CD4-positive, alpha-beta memory T cell (primary cell): ENCODE measurements at regions of chr5 and their contacts with region 1.

Region 1: DNA sequence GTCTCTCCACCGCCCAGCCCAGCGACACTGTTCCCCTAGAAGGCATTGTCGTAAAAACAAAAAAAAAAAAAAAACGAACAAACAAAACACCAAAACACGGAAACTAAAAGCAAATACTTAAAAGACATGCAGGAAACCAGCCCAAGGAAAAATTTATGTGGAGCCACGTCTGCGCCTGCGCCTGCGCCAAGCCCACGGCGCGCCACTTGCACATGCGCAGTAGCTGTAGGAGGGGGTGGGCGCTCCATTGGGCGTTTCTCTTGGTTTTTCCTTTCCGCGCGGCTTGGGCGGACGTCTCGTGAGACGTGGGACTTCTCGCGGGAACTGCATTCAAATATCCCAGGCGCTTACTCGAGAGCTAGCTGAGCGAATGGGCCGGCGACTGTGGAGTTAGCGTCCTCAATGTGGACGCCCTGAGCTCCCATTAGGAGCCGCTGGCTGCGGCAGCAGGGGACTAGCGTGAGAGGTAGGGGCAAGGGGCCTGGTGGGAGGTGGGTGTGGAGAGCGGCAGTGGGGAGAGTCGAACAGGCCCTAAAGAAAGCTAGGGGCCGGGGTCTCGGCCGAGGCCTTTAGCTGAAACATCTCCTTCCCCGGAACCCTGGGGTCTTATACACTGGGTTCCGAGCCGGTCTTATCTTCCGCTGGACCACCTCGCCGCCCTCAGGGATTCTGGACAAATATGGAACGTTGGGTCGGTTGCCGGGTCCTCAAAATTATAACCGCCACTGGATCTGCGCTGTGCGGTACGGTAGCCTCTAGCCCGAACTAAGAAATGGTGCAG is at the start of gene SPDL1:
- DNase-seq: peak; percentile 93 to 95 (median 94)
- H3K4me3 ChIP-seq: peak within 1 kb of the TSS; percentile 63 to 82
- H3K4me3 Mint-ChIP-seq: peak within 1 kb of the TSS; percentile 96 to 100 (median 99)
- H3K27ac ChIP-seq: peak within 1 kb of the TSS; percentile 76
- H3K27ac Mint-ChIP-seq: peak within 1 kb of the TSS; percentile 95 to 97 (median 96)
- H3K4me1 ChIP-seq: peaks cover 16% of the 10 kb centered on the region
- H3K4me1 Mint-ChIP-seq: peaks cover 20 to 47% (median 30%) of the 10 kb centered on the region in 4 donors
- H3K27me3 ChIP-seq: no peaks in the 10 kb centered on the region
- H3K27me3 Mint-ChIP-seq: no peaks in the 10 kb centered on the region
- total RNA-seq, gene SPDL1: 12.0 to 12.2 TPM

Region 2: DNA sequence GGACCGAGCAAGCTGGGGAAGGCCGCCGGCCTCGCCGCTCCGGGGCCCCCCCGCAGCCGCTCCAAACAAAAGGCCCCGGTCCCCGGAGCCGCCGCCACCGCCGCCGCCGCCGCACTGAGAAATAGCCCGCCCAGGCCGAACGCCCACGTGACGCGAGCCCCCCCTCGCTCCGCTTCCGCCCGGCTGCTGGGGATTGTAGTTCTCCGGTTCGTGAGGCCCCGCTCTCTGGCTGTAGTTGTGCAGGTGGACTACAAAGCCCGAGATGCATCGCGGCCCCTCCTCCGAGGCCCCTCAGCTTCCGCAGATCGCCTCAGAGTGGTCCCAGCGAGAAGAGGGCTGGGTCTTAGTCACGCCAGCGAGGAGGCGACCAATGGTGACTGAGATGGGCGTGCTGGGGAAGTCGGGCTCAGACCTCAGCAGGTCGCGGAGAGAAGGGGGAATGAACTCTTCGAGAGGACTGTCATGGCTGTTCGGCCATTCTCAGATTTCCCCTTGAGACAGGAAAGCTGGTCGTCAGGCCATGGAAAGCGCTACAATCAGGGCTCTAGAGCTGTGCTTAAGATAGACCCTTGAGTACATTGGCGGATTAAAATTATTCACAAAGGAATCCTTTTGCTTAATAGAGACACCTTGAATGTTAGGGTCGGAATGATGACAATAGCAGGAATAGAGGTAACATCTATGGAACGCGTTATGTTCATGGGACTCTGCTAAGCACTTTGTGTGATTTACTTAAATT is 1004.0 kb before region 1 on chr5:
- CTCF ChIA-PET with region 1: no interaction called
- POLR2A ChIA-PET with region 1: interaction called, 8 read pairs
- intact Hi-C with region 1: loop called (anchors 1 kb)
- DNase-seq: peak; percentile 94 to 98 (median 96)
- H3K4me3 ChIP-seq: peak overlapping the region; percentile 39 to 94
- H3K4me3 Mint-ChIP-seq: peak overlapping the region; percentile 88 to 98 (median 94)
- H3K27ac ChIP-seq: peak overlapping the region; percentile 80
- H3K27ac Mint-ChIP-seq: peak overlapping the region; percentile 87 to 99 (median 97)
- H3K4me1 ChIP-seq: peaks cover 39% of the 10 kb centered on the region
- H3K4me1 Mint-ChIP-seq: peaks cover 23 to 48% (median 36%) of the 10 kb centered on the region in 4 donors
- H3K27me3 ChIP-seq: no peaks in the 10 kb centered on the region
- H3K27me3 Mint-ChIP-seq: no peaks in the 10 kb centered on the region

Region 3: DNA sequence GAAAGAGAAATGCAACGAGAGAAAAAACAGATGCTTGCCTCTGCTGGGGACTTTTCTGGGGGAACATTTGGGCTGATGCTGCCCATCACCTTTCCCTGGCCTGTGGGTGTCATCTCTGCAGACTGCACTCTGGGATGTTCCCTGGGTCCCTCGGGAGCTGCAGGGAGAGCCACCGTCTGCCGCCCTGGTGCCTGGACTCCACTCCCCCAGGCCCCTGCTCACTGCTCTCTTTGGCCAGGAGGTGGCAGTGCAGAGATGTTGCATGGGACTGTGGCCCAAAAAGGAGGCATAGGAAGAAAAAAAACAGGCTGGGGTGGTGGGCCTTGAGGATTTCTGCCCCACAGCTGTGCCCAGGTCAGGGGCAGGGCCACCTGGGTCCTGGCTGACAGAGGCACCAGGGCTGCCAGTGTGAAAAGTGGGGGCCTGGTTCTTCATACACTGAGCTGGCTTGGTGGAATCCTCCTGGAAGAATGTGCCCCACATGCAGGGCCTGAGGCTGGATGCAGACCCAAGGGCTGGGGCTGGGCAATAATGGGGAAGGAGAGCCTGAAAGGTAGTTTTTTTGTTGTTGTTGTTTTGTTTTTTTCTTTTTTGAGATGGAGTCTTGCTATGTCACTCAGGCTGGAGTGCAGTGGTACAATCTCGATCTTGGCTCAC is 636.3 kb before region 1 on chr5:
- CTCF ChIA-PET with region 1: interaction called, 5 read pairs
- POLR2A ChIA-PET with region 1: no interaction called
- intact Hi-C with region 1: loop called (anchors 2 kb)
- DNase-seq: peak in 1 of 5 donors; percentile 5
- H3K4me3 ChIP-seq: no peak overlapping the region
- H3K4me3 Mint-ChIP-seq: no peak overlapping the region
- H3K27ac ChIP-seq: no peak overlapping the region
- H3K27ac Mint-ChIP-seq: no peak overlapping the region
- H3K4me1 ChIP-seq: no peaks in the 10 kb centered on the region
- H3K4me1 Mint-ChIP-seq: no peaks in the 10 kb centered on the region
- H3K27me3 ChIP-seq: no peaks in the 10 kb centered on the region
- H3K27me3 Mint-ChIP-seq: no peaks in the 10 kb centered on the region

Region 4: DNA sequence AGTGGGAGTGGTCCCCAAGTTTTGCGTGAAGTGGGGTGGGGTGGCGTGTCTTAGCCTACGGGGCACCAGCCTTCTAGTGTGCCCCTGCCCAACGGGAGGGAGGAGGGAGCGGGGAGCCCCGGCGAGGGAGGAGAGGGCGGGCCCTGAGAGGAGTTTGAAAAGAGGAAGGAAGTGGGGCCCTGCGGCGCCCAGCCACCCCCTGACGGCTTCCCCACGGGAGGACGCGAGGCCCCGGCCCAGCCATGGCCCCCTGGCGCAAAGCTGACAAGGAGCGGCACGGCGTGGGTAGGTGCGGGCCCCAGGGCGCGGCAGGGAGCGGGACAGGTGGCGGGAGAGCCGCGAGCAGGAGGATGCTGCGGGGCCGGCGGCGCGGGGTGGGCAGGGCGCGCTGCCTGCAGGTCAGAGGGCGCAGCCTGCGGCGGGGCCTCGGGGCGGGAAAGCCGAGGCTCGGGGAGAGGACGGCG is 53.5 kb after region 1 on chr5 and contains the start of gene DOCK2:
- CTCF ChIA-PET with region 1: interaction called, 7 read pairs
- POLR2A ChIA-PET with region 1: interaction called, 14 read pairs
- intact Hi-C with region 1: loop called (anchors 1 kb)
- DNase-seq: peak; percentile 61 to 82 (median 66)
- H3K4me3 ChIP-seq: peak within 1 kb of the TSS; percentile 71 to 80
- H3K4me3 Mint-ChIP-seq: peak within 1 kb of the TSS; percentile 91 to 96 (median 94)
- H3K27ac ChIP-seq: peak within 1 kb of the TSS; percentile 82
- H3K27ac Mint-ChIP-seq: peak within 1 kb of the TSS; percentile 93 to 97 (median 94)
- H3K4me1 ChIP-seq: peaks cover 50% of the 10 kb centered on the region
- H3K4me1 Mint-ChIP-seq: peaks cover 37 to 55% (median 45%) of the 10 kb centered on the region in 4 donors
- H3K27me3 ChIP-seq: no peaks in the 10 kb centered on the region
- H3K27me3 Mint-ChIP-seq: no peaks in the 10 kb centered on the region
- total RNA-seq, gene DOCK2: 222 to 223 TPM

Region 5: GRCh38 chr5:170960567-170960966 is 1377.0 kb after region 1 on chr5:
- CTCF ChIA-PET with region 1: no interaction called
- POLR2A ChIA-PET with region 1: no interaction called
- intact Hi-C with region 1: no loop called
- DNase-seq: no peak
- H3K4me3 ChIP-seq: no peak overlapping the region
- H3K4me3 Mint-ChIP-seq: no peak overlapping the region
- H3K27ac ChIP-seq: no peak overlapping the region
- H3K27ac Mint-ChIP-seq: no peak overlapping the region
- H3K4me1 ChIP-seq: no peaks in the 10 kb centered on the region
- H3K4me1 Mint-ChIP-seq: no peaks in the 10 kb centered on the region
- H3K27me3 ChIP-seq: no peaks in the 10 kb centered on the region
- H3K27me3 Mint-ChIP-seq: no peaks in the 10 kb centered on the region

Region 6: DNA sequence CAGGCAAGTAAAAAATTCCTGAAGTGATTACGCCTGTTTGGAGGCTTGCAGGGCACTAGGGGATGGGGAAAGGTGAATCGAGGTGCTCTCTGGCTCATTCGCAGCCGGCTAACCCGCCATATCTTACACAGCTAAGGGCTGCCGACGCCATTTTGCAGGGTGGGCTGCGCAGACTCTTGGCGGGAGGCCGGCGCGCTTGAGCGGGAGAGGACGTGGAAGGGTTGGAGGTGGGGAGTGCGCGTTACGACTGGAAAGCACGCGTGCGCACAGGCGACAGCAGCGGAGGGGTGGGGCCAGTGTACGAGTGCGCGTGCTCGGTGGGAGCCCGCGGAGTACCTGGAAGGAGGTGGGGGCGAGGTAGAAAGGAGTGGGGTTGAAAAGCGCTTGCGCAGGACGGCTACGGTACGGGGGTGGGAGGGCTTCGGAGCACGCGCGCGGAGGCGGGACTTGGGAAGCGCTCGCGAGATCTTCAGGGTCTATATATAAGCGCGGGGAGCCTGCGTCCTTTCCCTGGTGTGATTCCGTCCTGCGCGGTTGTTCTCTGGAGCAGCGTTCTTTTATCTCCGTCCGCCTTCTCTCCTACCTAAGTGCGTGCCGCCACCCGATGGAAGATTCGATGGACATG is 1803.8 kb after region 1 on chr5 and contains the start of gene NPM1:
- CTCF ChIA-PET with region 1: interaction called, 4 read pairs
- POLR2A ChIA-PET with region 1: no interaction called
- intact Hi-C with region 1: loop called (anchors 5 kb)
- DNase-seq: peak; percentile 97 to 99 (median 99)
- H3K4me3 ChIP-seq: peak within 1 kb of the TSS; percentile 74 to 94
- H3K4me3 Mint-ChIP-seq: peak within 1 kb of the TSS; percentile 97 to 99 (median 98)
- H3K27ac ChIP-seq: peak within 1 kb of the TSS; percentile 79
- H3K27ac Mint-ChIP-seq: peak within 1 kb of the TSS; percentile 95 to 100 (median 99)
- H3K4me1 ChIP-seq: peaks cover 45% of the 10 kb centered on the region
- H3K4me1 Mint-ChIP-seq: peaks cover 29 to 58% (median 43%) of the 10 kb centered on the region in 4 donors
- H3K27me3 ChIP-seq: no peaks in the 10 kb centered on the region
- H3K27me3 Mint-ChIP-seq: peaks cover 0 to 3% of the 10 kb centered on the region in 2 donors
- total RNA-seq, gene NPM1: 857 to 892 TPM